B cell (primary cell): ENCODE measurements at regions of chr12 and their contacts with region 1.

Region 1: GRCh38 chr12:111841750-111842555 is at the start of gene MAPKAPK5:
- DNase-seq: peak; percentile 99
- ATAC-seq: peak; percentile 91
- H3K4me3 ChIP-seq: peak within 1 kb of the TSS; percentile 81 to 99 (median 82)
- H3K4me3 Mint-ChIP-seq: peak within 1 kb of the TSS; percentile 94
- H3K27ac ChIP-seq: peak within 1 kb of the TSS; percentile 85 to 87
- H3K27ac Mint-ChIP-seq: peak within 1 kb of the TSS; percentile 99
- H3K4me1 ChIP-seq: peaks cover 28 to 29% of the 10 kb centered on the region in 2 donors
- H3K4me1 Mint-ChIP-seq: peaks cover 50% of the 10 kb centered on the region
- H3K27me3 ChIP-seq: no peaks in the 10 kb centered on the region
- H3K27me3 Mint-ChIP-seq: no peaks in the 10 kb centered on the region
- CTCF ChIP-seq: no peak
- total RNA-seq, gene MAPKAPK5: 64.4 and 73.1 TPM in 2 replicates

Region 2: DNA sequence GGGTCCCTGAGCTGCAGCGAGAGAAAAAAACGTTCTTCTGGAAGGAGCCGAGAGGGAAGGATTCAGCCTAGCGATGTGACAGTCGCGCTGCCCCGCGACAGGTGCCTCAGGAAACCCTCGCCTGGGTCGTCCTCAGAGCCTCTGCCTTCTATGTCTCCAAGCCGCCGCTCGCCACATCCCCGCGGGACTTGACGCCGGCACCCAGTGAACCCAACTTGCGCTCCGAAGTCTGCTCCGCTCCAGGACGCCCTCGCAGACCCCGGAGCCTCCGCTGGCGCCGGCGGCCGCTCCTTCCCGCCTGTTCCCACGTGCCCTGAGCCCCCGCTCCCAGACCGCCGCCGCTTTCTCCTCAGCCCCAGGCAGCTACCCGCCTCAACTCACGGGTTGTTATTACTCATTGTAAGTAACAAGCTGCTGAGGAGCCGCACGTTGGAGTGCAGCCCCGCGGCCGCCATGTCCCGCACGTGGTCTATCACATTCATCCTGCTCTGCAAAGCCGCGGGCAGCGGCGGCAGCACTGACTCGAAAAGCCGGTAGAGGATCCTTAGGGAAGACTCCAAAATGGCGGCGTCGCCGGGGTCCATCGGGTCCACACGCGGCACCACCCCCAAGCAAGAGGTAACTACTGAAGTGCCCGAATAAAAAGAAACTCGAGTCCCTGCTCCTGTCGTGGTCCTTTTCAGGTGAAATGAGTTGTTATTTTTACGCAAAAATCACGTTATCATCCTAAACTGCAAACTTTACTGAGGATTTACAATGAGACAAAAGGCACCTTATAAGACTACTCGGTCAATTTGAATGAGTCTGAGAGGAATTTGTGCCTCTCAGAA is 1438.6 kb before region 1 on chr12 and contains the start of gene ANAPC7:
- CTCF ChIA-PET with region 1: no interaction called
- POLR2A ChIA-PET with region 1: no interaction called
- intact Hi-C with region 1: loop called (anchors 2 kb)
- DNase-seq: peak; percentile 92
- ATAC-seq: peak; percentile 93
- H3K4me3 ChIP-seq: peak within 1 kb of the TSS; percentile 85 to 100 (median 98)
- H3K4me3 Mint-ChIP-seq: peak within 1 kb of the TSS; percentile 99
- H3K27ac ChIP-seq: peak within 1 kb of the TSS; percentile 83 to 89
- H3K27ac Mint-ChIP-seq: peak within 1 kb of the TSS; percentile 99
- H3K4me1 ChIP-seq: peaks cover 13 to 18% of the 10 kb centered on the region in 2 donors
- H3K4me1 Mint-ChIP-seq: peaks cover 34% of the 10 kb centered on the region
- H3K27me3 ChIP-seq: no peaks in the 10 kb centered on the region
- H3K27me3 Mint-ChIP-seq: peaks cover 1% of the 10 kb centered on the region
- CTCF ChIP-seq: no peak
- total RNA-seq, gene ANAPC7: 68.4 and 68.8 TPM in 2 replicates

Region 3: DNA sequence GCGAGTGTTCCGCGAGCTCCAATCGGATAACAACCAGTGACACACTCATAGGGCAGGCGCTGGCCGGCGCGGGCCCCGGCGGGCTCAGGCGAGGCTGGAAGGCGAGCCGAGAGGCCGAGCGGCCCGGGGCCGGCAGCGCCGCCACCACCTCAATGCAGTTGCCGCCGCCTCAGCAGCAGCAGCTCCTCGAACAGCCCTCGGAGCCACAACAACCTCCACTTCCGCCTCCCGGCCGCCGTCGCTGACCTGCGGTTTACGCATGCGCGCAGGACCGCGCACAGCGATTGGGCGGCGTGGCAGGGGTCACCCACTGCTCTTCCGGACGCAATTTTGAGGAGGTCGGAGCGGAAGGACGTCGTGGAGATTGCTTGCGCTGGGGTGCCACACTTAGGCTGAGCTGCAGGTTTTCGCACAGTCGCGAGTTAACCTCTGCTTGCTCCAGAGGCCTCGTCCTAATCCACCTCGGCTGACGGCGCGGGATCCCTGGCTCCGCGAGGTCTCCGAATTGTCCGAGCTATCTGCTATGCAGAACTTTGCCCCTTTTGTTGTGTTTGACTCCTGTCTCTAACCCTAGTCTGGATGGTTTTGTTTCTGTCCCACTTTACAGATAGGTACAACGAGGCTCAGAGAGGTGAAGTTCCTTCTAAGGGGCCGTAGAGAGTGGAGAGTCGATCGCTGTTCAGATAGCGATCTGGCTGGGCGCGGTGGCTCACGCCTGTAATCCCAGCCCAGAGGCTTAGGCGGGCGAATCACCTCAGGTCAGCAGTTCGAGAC is 156.0 kb before region 1 on chr12 and contains the starts of genes ACAD10 and BRAP:
- CTCF ChIA-PET with region 1: interaction called, 3 read pairs
- POLR2A ChIA-PET with region 1: interaction called, 4 read pairs
- intact Hi-C with region 1: loop called (anchors 1 kb)
- DNase-seq: peak; percentile 97
- ATAC-seq: peak; percentile 95
- H3K4me3 ChIP-seq: peak within 1 kb of the TSS; percentile 76 to 96 (median 95)
- H3K4me3 Mint-ChIP-seq: peak within 1 kb of the TSS; percentile 96
- H3K27ac ChIP-seq: peak within 1 kb of the TSS; percentile 61 to 80
- H3K27ac Mint-ChIP-seq: peak within 1 kb of the TSS; percentile 97
- H3K4me1 ChIP-seq: peaks cover 23 to 24% of the 10 kb centered on the region in 2 donors
- H3K4me1 Mint-ChIP-seq: peaks cover 31% of the 10 kb centered on the region
- H3K27me3 ChIP-seq: no peaks in the 10 kb centered on the region
- H3K27me3 Mint-ChIP-seq: no peaks in the 10 kb centered on the region
- CTCF ChIP-seq: no peak
- total RNA-seq, gene ACAD10: 48.6 and 55.3 TPM in 2 replicates
- total RNA-seq, gene BRAP: 25.3 and 25.7 TPM in 2 replicates

Region 4: DNA sequence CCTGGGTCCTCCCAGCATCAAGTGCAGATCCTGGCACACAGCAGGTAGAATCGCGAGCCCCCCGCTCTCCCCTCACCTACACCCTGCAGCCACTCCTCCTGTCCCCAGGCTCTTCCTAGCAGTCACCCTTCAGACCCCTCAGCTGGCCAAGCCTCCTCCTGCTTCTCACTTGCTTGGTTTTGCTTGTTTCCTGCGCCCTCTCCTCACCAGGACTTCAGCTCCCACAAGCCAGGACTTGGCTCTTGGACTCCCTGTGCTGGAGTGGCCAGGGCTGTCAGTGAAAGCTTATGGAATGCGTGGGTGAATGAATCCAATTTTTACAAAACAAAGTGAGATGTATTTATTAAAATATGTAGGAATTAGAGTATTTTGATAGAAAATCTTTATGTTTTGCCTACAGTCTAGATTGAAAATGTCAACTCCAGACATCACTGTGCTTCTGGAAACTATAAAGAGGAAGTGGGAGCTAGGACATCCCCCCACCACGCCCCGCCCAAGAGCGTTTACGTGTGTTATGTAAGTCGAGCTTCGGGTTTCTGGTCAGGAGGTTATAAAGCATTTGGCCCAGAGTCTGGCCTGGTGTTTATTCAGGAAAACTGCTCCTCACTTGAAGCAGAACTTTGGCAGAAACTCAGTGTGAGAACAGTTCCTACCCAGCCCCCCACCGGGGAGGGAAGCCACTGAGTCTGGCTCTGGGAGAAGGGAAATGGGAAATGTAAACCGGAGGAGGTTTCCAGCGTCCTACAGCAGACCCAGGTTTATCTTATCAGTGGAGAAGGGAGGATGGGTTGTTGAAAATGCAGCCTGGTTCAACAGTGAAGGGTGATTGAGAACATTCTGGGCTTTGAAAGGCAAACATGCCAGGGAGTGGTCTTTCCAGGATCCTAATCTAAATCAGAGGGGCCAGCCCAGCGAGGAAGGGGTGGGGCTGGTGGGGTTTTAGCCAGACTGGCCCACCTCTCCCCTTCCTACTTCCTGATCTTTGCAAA is 66.5 kb before region 1 on chr12:
- CTCF ChIA-PET with region 1: no interaction called
- POLR2A ChIA-PET with region 1: interaction called, 4 read pairs
- intact Hi-C with region 1: loop called (anchors 2 kb)
- DNase-seq: peak; percentile 92
- ATAC-seq: peak; percentile 93
- H3K4me3 ChIP-seq: peak overlapping the region in 4 of 5 experiments; percentile 3 to 48 (median 26)
- H3K4me3 Mint-ChIP-seq: peak overlapping the region; percentile 80
- H3K27ac ChIP-seq: peak overlapping the region; percentile 94 to 97
- H3K27ac Mint-ChIP-seq: peak overlapping the region; percentile 98
- H3K4me1 ChIP-seq: peaks cover 31 to 32% of the 10 kb centered on the region in 2 donors
- H3K4me1 Mint-ChIP-seq: peaks cover 36% of the 10 kb centered on the region
- H3K27me3 ChIP-seq: no peaks in the 10 kb centered on the region
- H3K27me3 Mint-ChIP-seq: no peaks in the 10 kb centered on the region
- CTCF ChIP-seq: no peak

Region 5: DNA sequence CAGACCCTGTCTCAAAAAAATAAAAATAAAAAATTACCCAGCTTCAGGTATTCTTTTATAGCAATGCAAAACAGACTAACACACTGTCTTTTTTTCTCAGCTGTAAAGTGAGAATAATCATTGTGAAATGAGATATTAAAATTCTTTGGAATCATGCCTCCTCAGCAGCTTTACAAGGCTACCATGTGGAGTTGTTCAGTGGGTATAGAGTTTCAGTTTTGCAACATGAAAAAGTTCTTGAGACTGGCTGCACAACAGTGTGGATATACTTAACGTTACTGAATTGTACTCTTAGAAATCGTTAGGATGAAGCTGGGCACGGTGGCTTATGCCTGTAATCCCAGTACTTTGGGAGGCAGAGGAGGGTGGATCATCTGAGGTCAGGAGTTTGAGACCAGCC is 15.6 kb before region 1 on chr12:
- CTCF ChIA-PET with region 1: no interaction called
- POLR2A ChIA-PET with region 1: no interaction called
- intact Hi-C with region 1: no loop called
- DNase-seq: no peak
- ATAC-seq: no peak
- H3K4me3 ChIP-seq: no peak overlapping the region
- H3K4me3 Mint-ChIP-seq: no peak overlapping the region
- H3K27ac ChIP-seq: no peak overlapping the region
- H3K27ac Mint-ChIP-seq: no peak overlapping the region
- H3K4me1 ChIP-seq: no peaks in the 10 kb centered on the region
- H3K4me1 Mint-ChIP-seq: no peaks in the 10 kb centered on the region
- H3K27me3 ChIP-seq: no peaks in the 10 kb centered on the region
- H3K27me3 Mint-ChIP-seq: peaks cover 23% of the 10 kb centered on the region
- CTCF ChIP-seq: no peak

Region 6: DNA sequence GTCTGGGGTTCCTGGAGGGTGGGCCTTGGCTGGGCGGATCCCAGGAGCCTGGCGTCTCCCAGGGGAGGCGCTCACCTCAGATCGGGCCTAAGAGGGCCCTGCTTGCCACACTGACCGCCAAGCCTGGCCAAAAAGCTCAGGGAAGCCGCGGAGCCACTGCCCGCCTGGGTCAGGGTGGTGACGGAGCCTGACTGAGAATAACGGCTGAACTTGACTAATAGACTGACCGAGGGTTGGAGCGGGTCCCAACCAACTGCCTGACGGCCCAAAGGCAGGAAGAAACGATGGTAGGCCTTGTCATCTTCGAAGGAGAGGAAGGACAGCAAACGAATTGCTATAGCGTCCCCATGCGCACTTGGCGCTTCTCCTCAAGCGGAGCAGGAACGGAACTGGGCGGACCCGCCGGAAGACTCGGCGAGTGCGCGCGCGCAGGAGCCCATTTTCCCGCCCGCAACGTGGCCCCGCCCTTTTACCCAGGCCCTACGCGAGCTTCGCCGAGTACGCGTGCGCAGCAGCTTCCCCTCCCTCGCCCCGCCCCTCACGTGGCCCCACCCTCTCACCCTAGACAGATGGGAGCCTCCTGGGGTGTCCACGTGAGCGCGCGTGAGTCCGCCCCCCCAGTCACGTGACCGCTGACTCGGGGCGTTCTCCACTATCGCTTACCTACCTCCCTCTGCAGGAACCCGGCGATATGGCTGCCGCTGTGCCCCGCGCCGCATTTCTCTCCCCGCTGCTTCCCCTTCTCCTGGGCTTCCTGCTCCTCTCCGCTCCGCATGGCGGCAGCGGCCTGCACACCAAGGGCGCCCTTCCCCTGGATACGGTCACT is 171.0 kb after region 1 on chr12 and contains the starts of genes ERP29 and TMEM116:
- CTCF ChIA-PET with region 1: no interaction called
- POLR2A ChIA-PET with region 1: interaction called, 8 read pairs
- intact Hi-C with region 1: loop called (anchors 1 kb)
- DNase-seq: peak; percentile 99
- ATAC-seq: peak; percentile 75
- H3K4me3 ChIP-seq: peak within 1 kb of the TSS; percentile 50 to 97 (median 88)
- H3K4me3 Mint-ChIP-seq: peak within 1 kb of the TSS; percentile 87
- H3K27ac ChIP-seq: peak within 1 kb of the TSS; percentile 92 to 93
- H3K27ac Mint-ChIP-seq: peak within 1 kb of the TSS; percentile 91
- H3K4me1 ChIP-seq: peaks cover 45 to 54% of the 10 kb centered on the region in 2 donors
- H3K4me1 Mint-ChIP-seq: peaks cover 46% of the 10 kb centered on the region
- H3K27me3 ChIP-seq: no peaks in the 10 kb centered on the region
- H3K27me3 Mint-ChIP-seq: no peaks in the 10 kb centered on the region
- CTCF ChIP-seq: peak; percentile 69
- total RNA-seq, gene ERP29: 149 and 152 TPM in 2 replicates
- total RNA-seq, gene TMEM116: 10.4 and 11.7 TPM in 2 replicates

Region 7: GRCh38 chr12:112418608-112419298 is 576.8 kb after region 1 on chr12 and contains the start of gene PTPN11:
- CTCF ChIA-PET with region 1: no interaction called
- POLR2A ChIA-PET with region 1: interaction called, 3 read pairs
- intact Hi-C with region 1: loop called (anchors 5 kb)
- DNase-seq: peak; percentile 95
- ATAC-seq: peak; percentile 84
- H3K4me3 ChIP-seq: peak within 1 kb of the TSS; percentile 77 to 97 (median 95)
- H3K4me3 Mint-ChIP-seq: peak within 1 kb of the TSS; percentile 97
- H3K27ac ChIP-seq: peak within 1 kb of the TSS; percentile 86 to 89
- H3K27ac Mint-ChIP-seq: peak within 1 kb of the TSS; percentile 95
- H3K4me1 ChIP-seq: peaks cover 13 to 18% of the 10 kb centered on the region in 2 donors
- H3K4me1 Mint-ChIP-seq: peaks cover 32% of the 10 kb centered on the region
- H3K27me3 ChIP-seq: no peaks in the 10 kb centered on the region
- H3K27me3 Mint-ChIP-seq: no peaks in the 10 kb centered on the region
- CTCF ChIP-seq: peak; percentile 71
- total RNA-seq, gene PTPN11: 49.8 and 53.1 TPM in 2 replicates

Region 8: DNA sequence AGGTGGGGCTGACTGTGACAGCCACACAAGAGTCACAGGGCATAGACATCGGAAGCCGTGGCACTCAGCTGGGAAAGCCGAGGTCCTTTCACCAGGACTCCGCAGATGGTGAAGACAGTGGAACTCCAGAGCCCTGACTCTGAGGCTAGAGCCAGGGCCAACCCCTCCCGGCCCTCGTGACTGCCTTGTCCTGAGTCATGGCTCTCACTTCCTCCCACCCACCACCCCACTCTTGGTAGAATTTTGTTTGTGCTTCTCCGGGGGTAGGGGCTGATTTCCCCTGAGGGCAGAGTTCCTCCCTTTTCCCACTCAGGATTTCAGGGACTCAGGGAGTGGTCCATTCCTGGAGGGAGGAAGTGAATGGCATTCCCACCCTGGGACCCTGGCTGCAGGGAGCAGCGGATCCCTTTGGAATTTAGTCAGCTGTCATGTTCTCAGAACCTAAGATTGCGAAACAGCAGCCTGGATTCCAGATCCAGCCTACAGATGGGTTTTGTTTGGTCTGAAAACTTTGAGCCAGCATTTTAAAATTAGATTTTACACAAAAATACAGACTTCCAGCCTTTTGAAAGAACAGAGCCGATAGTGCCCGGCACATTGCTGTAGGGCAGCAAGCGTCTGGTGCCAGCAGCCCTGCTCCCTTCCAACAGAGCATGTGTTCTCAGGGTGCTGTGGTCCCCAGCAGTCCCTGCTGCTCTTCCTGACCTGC is 1430.1 kb after region 1 on chr12:
- CTCF ChIA-PET with region 1: no interaction called
- POLR2A ChIA-PET with region 1: no interaction called
- intact Hi-C with region 1: no loop called
- DNase-seq: no peak
- ATAC-seq: no peak
- H3K4me3 ChIP-seq: no peak overlapping the region
- H3K4me3 Mint-ChIP-seq: no peak overlapping the region
- H3K27ac ChIP-seq: no peak overlapping the region
- H3K27ac Mint-ChIP-seq: no peak overlapping the region
- H3K4me1 ChIP-seq: no peaks in the 10 kb centered on the region
- H3K4me1 Mint-ChIP-seq: no peaks in the 10 kb centered on the region
- H3K27me3 ChIP-seq: no peaks in the 10 kb centered on the region
- H3K27me3 Mint-ChIP-seq: no peaks in the 10 kb centered on the region
- CTCF ChIP-seq: no peak